ENCODE measurements at regions of chr17 and their contacts with region 1.

Region 1: GRCh38 chr17:64506576-64507477 is at the start of gene CEP95:
- DNase-seq: peak; percentile 96
- H3K4me3 Mint-ChIP-seq: peak within 1 kb of the TSS; percentile 99
- H3K27ac Mint-ChIP-seq: peak within 1 kb of the TSS; percentile 100
- H3K4me1 Mint-ChIP-seq: peaks cover 33% of the 10 kb centered on the region
- H3K27me3 Mint-ChIP-seq: no peaks in the 10 kb centered on the region
- CTCF ChIP-seq: no peak
- total RNA-seq, gene CEP95: 57.2 and 61.6 TPM in 2 replicates

Region 2: GRCh38 chr17:64420143-64420971 is 86.5 kb before region 1 on chr17:
- CTCF ChIA-PET with region 1: interaction called, 6 read pairs
- POLR2A ChIA-PET with region 1: interaction called, 22 read pairs
- intact Hi-C with region 1: loop called (anchors 1 kb)
- DNase-seq: peak; percentile 87
- H3K4me3 Mint-ChIP-seq: no peak overlapping the region
- H3K27ac Mint-ChIP-seq: no peak overlapping the region
- H3K4me1 Mint-ChIP-seq: no peaks in the 10 kb centered on the region
- H3K27me3 Mint-ChIP-seq: no peaks in the 10 kb centered on the region
- CTCF ChIP-seq: peak; percentile 73

Region 3: DNA sequence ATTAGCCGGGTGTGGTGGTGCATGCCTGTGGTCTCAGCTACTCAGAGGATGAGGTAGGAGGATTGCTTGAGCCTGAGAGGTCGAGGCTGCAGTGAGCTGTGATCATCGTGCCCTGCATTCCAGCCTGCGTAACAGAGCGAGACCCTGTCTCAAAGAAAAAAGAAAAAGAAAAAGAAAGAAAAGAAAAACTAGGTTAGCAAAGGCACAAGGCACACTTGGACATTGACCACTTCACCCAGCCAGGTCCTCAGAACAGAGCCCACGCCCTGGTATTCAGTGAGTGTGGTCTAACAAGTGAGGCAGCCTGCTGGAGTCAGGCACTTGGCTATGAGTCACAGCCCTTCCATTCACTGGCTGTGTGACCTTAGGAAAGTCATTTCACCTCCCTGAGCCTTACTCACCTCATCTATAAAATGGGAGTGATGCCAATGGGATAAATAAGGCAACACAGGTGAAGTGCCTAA is 47.5 kb before region 1 on chr17:
- CTCF ChIA-PET with region 1: no interaction called
- POLR2A ChIA-PET with region 1: no interaction called
- intact Hi-C with region 1: no loop called
- DNase-seq: peak; percentile 43
- H3K4me3 Mint-ChIP-seq: no peak overlapping the region
- H3K27ac Mint-ChIP-seq: no peak overlapping the region
- H3K4me1 Mint-ChIP-seq: no peaks in the 10 kb centered on the region
- H3K27me3 Mint-ChIP-seq: no peaks in the 10 kb centered on the region
- CTCF ChIP-seq: no peak

Region 4: GRCh38 chr17:64470625-64471024 is 36.2 kb before region 1 on chr17:
- CTCF ChIA-PET with region 1: no interaction called
- POLR2A ChIA-PET with region 1: no interaction called
- intact Hi-C with region 1: no loop called
- DNase-seq: no peak
- H3K4me3 Mint-ChIP-seq: no peak overlapping the region
- H3K27ac Mint-ChIP-seq: no peak overlapping the region
- H3K4me1 Mint-ChIP-seq: no peaks in the 10 kb centered on the region
- H3K27me3 Mint-ChIP-seq: no peaks in the 10 kb centered on the region
- CTCF ChIP-seq: no peak

Region 5: GRCh38 chr17:64520359-64520758 is 13.5 kb after region 1 on chr17:
- CTCF ChIA-PET with region 1: interaction called, 3 read pairs
- POLR2A ChIA-PET with region 1: interaction called, 17 read pairs
- intact Hi-C with region 1: no loop called
- DNase-seq: no peak
- H3K4me3 Mint-ChIP-seq: no peak overlapping the region
- H3K27ac Mint-ChIP-seq: no peak overlapping the region
- H3K4me1 Mint-ChIP-seq: peaks cover 7% of the 10 kb centered on the region
- H3K27me3 Mint-ChIP-seq: no peaks in the 10 kb centered on the region
- CTCF ChIP-seq: no peak

Region 6: GRCh38 chr17:64622931-64623654 is 116.3 kb after region 1 on chr17:
- CTCF ChIA-PET with region 1: no interaction called
- POLR2A ChIA-PET with region 1: interaction called, 12 read pairs
- intact Hi-C with region 1: no loop called
- DNase-seq: peak; percentile 79
- H3K4me3 Mint-ChIP-seq: peak overlapping the region; percentile 49
- H3K27ac Mint-ChIP-seq: peak overlapping the region; percentile 73
- H3K4me1 Mint-ChIP-seq: peaks cover 26% of the 10 kb centered on the region
- H3K27me3 Mint-ChIP-seq: no peaks in the 10 kb centered on the region
- CTCF ChIP-seq: no peak

Region 7: DNA sequence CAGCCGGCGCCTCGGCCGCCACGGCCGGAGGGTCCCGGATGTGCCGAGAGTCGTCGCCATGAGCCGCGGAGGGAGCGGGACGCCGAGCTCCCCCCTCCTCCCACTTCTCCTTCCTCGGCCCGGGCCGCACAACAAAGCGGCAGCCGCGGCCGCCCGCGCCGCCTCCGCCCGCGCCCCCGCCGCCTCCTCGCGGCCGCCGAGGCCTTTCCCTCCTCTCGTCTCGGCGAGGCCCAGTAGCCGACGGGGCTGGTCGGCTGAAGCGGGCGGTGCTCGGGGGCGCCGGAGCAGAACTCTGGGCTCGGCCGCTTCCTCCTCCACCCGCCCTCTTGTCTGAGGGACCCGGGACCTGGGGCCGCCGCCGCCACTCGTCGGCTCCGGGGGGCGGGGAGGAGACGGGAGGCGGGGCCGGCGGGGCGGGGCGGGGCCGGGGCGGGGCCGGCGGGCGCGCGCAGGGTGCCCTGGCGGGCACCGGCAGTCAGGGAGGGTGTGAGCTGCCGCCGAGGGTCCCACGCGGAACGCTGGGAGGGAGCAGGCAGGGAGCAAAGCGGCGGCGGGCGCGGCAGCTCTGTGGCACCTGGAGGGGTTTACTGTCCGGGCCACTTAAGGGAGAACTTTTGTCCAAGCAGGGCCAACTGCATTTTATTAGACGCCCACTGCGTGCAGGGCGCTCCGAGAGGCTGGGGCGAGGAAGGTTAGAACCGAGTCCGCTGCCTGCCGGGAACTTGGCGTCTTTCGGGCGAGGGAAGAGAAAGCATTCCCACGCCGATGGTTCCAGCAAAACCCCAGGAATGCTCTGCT is 155.3 kb after region 1 on chr17 and contains the start of gene SMURF2:
- CTCF ChIA-PET with region 1: no interaction called
- POLR2A ChIA-PET with region 1: interaction called, 143 read pairs
- intact Hi-C with region 1: no loop called
- DNase-seq: peak; percentile 74
- H3K4me3 Mint-ChIP-seq: peak within 1 kb of the TSS; percentile 99
- H3K27ac Mint-ChIP-seq: peak within 1 kb of the TSS; percentile 97
- H3K4me1 Mint-ChIP-seq: peaks cover 24% of the 10 kb centered on the region
- H3K27me3 Mint-ChIP-seq: no peaks in the 10 kb centered on the region
- CTCF ChIP-seq: no peak
- total RNA-seq, gene SMURF2: 49.2 and 55.8 TPM in 2 replicates

Region 8: DNA sequence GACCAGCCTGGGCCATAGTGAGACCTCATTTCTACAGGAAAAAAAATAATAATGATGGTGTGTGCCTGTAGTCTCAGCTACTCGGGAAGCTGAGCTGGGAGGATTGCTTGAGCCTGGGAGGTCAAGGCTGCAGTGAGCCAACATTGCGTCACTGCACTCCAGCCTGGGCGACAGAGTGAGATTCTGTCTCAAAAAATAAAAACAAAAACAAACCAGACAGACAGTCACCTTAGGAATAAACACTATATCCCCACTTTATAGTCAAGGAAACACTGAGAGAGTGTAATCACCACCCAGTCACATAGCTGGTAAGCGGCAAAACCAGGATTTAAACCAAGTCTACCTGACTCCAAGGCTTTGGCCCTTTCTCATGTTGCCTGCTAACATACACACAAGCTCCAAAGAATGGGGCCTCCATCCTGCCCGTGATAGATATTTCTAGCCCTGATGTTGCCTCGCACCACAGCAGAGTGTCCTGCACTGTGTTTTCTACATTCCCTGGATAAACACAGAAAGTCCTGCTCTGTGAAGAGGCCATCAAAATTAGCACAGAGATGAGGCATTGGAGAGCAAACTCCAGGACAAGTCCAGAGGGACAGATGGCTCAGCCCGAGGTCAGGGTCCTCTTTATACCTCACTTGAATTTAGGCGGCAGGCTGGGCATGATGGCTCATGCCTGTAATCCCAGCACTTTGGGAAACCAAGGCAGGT is 221.4 kb after region 1 on chr17:
- CTCF ChIA-PET with region 1: no interaction called
- POLR2A ChIA-PET with region 1: no interaction called
- intact Hi-C with region 1: no loop called
- DNase-seq: no peak
- H3K4me3 Mint-ChIP-seq: no peak overlapping the region
- H3K27ac Mint-ChIP-seq: no peak overlapping the region
- H3K4me1 Mint-ChIP-seq: peaks cover 16% of the 10 kb centered on the region
- H3K27me3 Mint-ChIP-seq: no peaks in the 10 kb centered on the region
- CTCF ChIP-seq: no peak